MCF 10A (cell line): ENCODE measurements at regions of chr12 and their contacts with region 1.

Region 1: GRCh38 chr12:124940549-124941527 is 26.4 kb upstream of the UBC start:
- DNase-seq: peak; percentile 95
- H3K4me3 Mint-ChIP-seq: no peak overlapping the region
- H3K27ac Mint-ChIP-seq: no peak overlapping the region
- H3K4me1 Mint-ChIP-seq: peaks cover 8% of the 10 kb centered on the region
- H3K27me3 Mint-ChIP-seq: no peaks in the 10 kb centered on the region
- CTCF ChIP-seq: peak; percentile 92

Region 2: GRCh38 chr12:124829008-124829707 is 111.7 kb before region 1 on chr12:
- CTCF ChIA-PET with region 1: interaction called, 4 read pairs
- POLR2A ChIA-PET with region 1: interaction called, 17 read pairs
- intact Hi-C with region 1: no loop called
- DNase-seq: peak; percentile 91
- H3K4me3 Mint-ChIP-seq: peak overlapping the region; percentile 58
- H3K27ac Mint-ChIP-seq: peak overlapping the region; percentile 96
- H3K4me1 Mint-ChIP-seq: peaks cover 43% of the 10 kb centered on the region
- H3K27me3 Mint-ChIP-seq: no peaks in the 10 kb centered on the region
- CTCF ChIP-seq: no peak

Region 3: GRCh38 chr12:124863416-124864325 is 77.2 kb before region 1 on chr12 and contains the start of gene SCARB1:
- CTCF ChIA-PET with region 1: no interaction called
- POLR2A ChIA-PET with region 1: interaction called, 8 read pairs
- intact Hi-C with region 1: loop called (anchors 2 kb)
- DNase-seq: peak; percentile 83
- H3K4me3 Mint-ChIP-seq: peak within 1 kb of the TSS; percentile 76
- H3K27ac Mint-ChIP-seq: peak within 1 kb of the TSS; percentile 86
- H3K4me1 Mint-ChIP-seq: peaks cover 32% of the 10 kb centered on the region
- H3K27me3 Mint-ChIP-seq: no peaks in the 10 kb centered on the region
- CTCF ChIP-seq: no peak
- total RNA-seq, gene SCARB1: 48.2 and 71.0 TPM in 2 replicates

Region 4: DNA sequence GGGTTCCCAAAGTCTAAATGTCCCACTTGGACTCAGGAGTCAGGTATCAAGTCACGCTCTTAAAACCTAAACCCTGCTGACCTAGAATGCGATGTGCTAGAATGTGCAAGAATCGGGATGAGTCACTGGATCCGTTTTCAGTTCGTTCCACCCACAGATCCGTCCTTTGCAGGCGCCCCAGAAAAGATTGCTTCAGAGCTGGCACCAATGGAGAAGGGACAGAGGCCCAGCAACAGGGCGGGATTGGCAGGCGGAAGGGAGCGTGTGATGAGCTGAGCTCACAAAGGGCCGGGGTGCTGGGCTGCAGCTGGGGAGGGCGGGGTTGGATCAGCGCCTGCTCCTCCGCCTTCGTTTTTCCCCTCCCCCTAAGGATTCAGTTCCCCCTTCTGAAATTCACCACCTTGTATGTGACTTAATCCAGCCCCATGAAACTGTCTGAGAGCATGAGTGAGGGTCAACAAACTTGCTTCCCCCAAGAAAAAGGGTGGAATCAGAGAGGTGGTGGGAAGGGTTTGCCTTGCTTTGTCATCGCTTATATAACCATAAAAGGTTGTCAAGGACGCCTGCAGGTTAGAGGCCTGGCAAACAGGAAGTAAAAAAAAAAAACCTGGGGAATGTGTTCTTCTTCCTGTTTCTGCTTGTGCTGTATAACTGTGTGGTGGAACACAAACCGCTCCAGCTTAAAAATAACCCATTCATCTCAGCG is 23.6 kb before region 1 on chr12:
- CTCF ChIA-PET with region 1: interaction called, 170 read pairs
- POLR2A ChIA-PET with region 1: interaction called, 2,121 read pairs
- intact Hi-C with region 1: loop called (anchors 1 kb)
- DNase-seq: peak; percentile 100
- H3K4me3 Mint-ChIP-seq: peak overlapping the region; percentile 95
- H3K27ac Mint-ChIP-seq: peak overlapping the region; percentile 100
- H3K4me1 Mint-ChIP-seq: peaks cover 44% of the 10 kb centered on the region
- H3K27me3 Mint-ChIP-seq: no peaks in the 10 kb centered on the region
- CTCF ChIP-seq: no peak

Region 5: DNA sequence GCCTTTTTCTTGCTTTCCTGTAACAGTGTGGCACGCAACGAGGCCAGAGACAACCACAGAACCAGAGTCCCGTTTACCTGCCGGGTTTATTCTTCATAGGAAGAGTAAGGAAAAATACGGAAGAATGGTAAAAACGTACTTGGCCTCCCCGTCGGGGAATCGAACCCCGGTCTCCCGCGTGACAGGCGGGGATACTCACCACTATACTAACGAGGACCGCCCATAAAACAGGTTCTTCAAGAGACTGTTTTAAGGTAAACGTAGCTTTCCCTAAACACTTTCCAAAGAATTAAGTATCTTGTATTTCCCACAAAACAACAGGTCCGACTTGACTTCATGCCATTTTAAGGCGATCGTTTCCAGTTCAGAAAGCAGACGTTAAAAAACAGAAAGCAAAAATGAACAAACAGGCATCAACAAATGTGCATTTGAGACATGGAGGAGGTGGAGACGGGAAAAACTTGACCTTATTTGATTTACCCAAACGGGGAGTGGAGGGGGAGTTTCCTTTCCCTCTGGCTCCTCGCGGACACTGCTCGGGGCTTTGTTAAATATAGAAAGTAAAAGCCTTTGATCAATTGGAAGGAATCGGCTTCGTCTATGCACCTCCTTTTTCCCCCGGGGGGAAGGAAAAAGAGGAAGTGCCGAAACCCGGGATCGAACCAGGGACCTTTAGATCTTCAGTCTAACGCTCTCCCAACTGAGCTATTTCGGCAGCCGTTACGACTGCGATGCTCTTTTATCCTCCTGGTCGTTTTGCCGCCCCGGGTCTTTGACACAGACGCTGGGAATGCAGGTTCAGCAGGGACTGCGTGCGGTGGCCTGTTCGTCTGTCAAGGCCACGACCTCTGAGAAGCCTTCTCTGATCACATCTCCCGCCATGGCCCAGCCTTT is 13.4 kb before region 1 on chr12:
- CTCF ChIA-PET with region 1: interaction called, 170 read pairs
- POLR2A ChIA-PET with region 1: interaction called, 2,121 read pairs
- intact Hi-C with region 1: loop called (anchors 1 kb)
- DNase-seq: peak; percentile 94
- H3K4me3 Mint-ChIP-seq: peak overlapping the region; percentile 73
- H3K27ac Mint-ChIP-seq: peak overlapping the region; percentile 99
- H3K4me1 Mint-ChIP-seq: peaks cover 42% of the 10 kb centered on the region
- H3K27me3 Mint-ChIP-seq: no peaks in the 10 kb centered on the region
- CTCF ChIP-seq: no peak

Region 6: DNA sequence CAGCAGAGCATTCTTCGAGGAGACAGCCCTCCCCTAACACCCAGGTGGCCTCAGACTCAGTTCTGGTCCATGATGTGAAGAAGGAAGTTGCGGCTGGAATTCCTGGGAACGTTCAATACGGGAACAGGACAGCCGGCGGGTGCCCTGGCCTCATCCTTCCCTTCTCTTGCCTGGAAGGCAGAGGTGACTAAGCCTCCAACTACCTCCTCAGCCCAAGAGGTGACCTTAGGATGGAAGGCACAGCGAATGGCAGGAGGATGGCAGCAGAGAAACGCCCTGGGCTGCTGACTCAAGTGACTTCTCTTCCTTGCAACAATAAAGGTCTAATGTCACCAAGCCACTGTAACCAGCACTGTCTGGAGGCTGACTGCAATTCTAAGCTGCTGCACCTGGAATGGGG is 12.0 kb after region 1 on chr12:
- CTCF ChIA-PET with region 1: interaction called, 10 read pairs
- POLR2A ChIA-PET with region 1: interaction called, 3 read pairs
- intact Hi-C with region 1: no loop called
- DNase-seq: no peak
- H3K4me3 Mint-ChIP-seq: no peak overlapping the region
- H3K27ac Mint-ChIP-seq: no peak overlapping the region
- H3K4me1 Mint-ChIP-seq: no peaks in the 10 kb centered on the region
- H3K27me3 Mint-ChIP-seq: no peaks in the 10 kb centered on the region
- CTCF ChIP-seq: no peak

Region 7: DNA sequence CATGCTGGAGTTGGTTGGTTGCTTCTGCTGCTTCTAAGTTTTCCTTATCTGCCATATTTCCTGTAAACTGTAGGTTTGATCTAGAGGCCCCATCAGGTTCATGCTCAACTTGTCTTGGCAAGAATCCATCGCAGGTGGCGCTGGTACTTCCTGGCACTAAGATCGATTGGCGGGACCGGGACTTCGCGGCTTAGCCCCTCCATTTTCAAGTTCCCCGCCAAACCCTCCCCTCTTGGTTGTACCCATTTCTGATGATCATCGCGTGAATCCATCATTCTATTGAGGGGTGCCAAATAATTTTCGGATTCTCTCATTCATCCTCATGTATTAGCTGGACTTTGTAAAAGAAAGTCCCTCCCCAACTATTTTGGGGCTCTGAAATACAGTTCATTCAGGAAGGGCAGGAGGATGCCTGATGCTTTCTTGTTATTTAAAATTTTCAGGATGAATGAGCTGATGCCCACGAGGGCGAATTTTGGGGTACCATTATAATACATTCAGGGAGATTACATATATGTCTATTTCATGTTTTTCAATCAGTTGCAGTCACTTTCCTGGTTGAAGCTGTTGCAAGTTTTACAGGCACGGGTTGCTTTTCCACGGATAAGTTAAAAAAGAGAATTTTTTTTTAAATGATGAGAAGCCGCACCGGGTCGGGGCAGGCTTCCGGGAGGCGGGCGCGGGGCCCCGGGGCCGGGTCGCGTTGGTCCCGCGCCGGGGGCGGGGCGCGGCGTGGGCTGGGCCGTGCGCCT is 52.2 kb after region 1 on chr12:
- CTCF ChIA-PET with region 1: no interaction called
- POLR2A ChIA-PET with region 1: interaction called, 24 read pairs
- intact Hi-C with region 1: no loop called
- DNase-seq: peak; percentile 80
- H3K4me3 Mint-ChIP-seq: peak overlapping the region; percentile 93
- H3K27ac Mint-ChIP-seq: peak overlapping the region; percentile 25
- H3K4me1 Mint-ChIP-seq: peaks cover 15% of the 10 kb centered on the region
- H3K27me3 Mint-ChIP-seq: no peaks in the 10 kb centered on the region
- CTCF ChIP-seq: peak; percentile 54